ENCODE measurements at regions of chr7 and their contacts with region 1.

Region 1: DNA sequence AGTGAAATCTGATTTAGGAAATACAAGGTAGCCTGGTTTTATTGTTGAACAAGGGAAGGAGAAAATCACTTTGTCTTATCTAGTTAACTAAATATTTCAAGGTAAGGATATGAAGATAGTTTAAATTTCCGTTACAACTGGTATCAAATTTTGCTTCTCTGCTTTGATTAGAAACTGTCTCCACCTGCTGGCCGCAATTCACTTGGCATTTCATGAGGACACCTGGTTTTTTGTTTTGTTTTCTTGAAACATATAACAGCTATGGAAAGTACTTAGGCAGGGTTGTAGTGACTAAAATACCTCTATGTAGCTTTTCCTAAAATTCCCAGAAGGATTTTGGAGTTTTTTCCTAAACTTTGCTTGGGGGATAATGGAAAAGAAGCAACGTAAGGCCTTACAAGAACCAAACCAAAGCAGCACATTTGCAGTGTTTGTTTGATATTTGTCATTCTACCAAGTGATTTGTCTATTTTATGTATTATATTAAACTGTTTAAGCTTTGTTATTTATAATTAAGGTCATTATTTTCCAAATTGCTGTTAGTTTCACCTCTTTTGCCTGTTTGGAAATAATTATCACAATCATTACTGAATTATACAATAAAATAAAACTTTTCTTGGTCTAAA is 73.6 kb downstream of the AHCYL2 start:
- DNase-seq: peak in 32 of 35 experiments; percentile 6 to 66 (median 43)
- ATAC-seq: peak in 1 of 4 experiments; percentile 31
- H3K4me3 ChIP-seq: no peak overlapping the region
- H3K4me3 Mint-ChIP-seq: no peak overlapping the region
- H3K27ac ChIP-seq: no peak overlapping the region
- H3K27ac Mint-ChIP-seq: no peak overlapping the region
- H3K4me1 ChIP-seq: no peaks in the 10 kb centered on the region
- H3K4me1 Mint-ChIP-seq: peaks cover 0 to 7% (median 4%) of the 10 kb centered on the region in 3 donors
- H3K27me3 ChIP-seq: no peaks in the 10 kb centered on the region
- H3K27me3 Mint-ChIP-seq: no peaks in the 10 kb centered on the region

Region 2: DNA sequence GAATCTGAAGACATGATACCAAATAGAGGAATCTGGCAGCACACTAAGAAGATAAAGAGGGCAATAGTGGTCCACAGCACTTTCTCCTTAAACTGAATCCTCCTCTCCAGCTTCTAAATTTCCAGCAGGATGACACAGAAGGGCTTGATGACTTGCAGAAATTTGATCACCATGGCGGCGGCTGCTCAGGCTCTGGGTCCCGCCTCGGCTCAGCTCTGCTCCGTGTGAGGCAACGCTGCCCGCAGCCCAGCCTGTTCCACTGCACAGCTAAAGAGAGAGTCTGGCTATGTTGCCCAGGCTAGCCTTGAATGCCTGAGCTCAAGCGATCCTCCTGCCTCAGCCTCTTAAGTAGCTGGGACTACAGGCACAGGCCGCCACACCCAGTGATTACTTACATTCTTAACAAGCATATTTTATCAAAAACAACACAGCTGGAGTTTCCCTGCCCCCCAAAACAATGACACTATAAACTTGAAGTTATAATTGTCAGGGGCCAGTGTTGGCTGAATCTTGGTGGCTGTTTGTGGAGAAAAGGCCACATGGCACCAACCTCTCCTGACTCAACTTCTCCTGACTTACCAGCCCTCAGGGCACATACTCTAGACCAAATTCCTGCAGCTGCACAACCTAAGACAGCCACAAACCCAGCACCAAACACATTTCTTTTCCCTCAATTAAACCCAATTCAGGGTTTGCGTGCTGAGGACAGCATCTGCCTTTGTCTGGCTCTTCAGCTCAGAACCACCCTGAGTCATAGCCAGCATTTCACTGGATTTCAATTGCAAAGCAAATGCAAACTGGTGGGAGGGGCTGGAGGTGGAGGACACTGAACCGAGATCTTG is 231.9 kb before region 1 on chr7:
- CTCF ChIA-PET with region 1: no interaction called
- POLR2A ChIA-PET with region 1: no interaction called
- DNase-seq: no peak
- ATAC-seq: no peak
- H3K4me3 ChIP-seq: no peak overlapping the region
- H3K4me3 Mint-ChIP-seq: no peak overlapping the region
- H3K27ac ChIP-seq: no peak overlapping the region
- H3K27ac Mint-ChIP-seq: no peak overlapping the region
- H3K4me1 ChIP-seq: no peaks in the 10 kb centered on the region
- H3K4me1 Mint-ChIP-seq: no peaks in the 10 kb centered on the region
- H3K27me3 ChIP-seq: peaks cover 0 to 14% of the 10 kb centered on the region in 2 experiments
- H3K27me3 Mint-ChIP-seq: peaks cover 15% of the 10 kb centered on the region in 2 donors

Region 3: DNA sequence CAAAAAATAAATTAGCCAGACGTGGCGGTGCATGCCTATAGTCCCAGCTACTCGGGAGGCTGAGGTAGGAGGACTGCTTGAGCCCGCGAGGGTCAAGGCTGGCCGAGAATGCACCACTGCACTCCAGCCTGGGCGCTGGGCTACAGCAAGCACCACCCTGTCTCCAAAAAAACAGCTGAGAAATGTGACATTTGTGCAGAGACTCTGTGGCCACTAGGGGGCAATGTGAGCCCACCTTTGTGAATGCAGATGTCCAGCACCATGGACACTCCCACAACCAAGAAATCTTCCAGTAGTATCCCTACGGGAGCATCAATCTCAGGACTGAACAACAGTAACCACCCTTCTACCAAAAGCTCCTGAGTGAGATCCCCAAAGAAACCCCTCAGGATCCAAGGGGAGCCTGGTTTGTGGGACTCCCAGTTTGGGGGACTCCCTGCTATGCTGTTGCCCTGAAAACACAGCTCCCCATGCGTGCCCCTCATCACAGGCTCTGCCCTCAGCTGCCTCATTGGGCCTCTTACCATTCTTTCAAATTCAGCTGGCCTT is 79.8 kb before region 1 on chr7:
- CTCF ChIA-PET with region 1: interaction called, 13 to 48 read pairs
- POLR2A ChIA-PET with region 1: interaction called in 1 of 2 experiments, 3 read pairs
- DNase-seq: peak; percentile 33 to 89 (median 69)
- ATAC-seq: peak; percentile 84 to 88 (median 85)
- H3K4me3 ChIP-seq: no peak overlapping the region
- H3K4me3 Mint-ChIP-seq: no peak overlapping the region
- H3K27ac ChIP-seq: no peak overlapping the region
- H3K27ac Mint-ChIP-seq: no peak overlapping the region
- H3K4me1 ChIP-seq: peaks cover 8 to 12% of the 10 kb centered on the region in 2 experiments
- H3K4me1 Mint-ChIP-seq: peaks cover 14 to 18% (median 14%) of the 10 kb centered on the region in 3 donors
- H3K27me3 ChIP-seq: peaks cover 0 to 3% of the 10 kb centered on the region in 2 experiments
- H3K27me3 Mint-ChIP-seq: peaks cover 0 to 2% of the 10 kb centered on the region in 2 donors

Region 4: GRCh38 chr7:129362496-129362895 is 64.1 kb after region 1 on chr7:
- CTCF ChIA-PET with region 1: interaction called in 1 of 2 experiments, 10 read pairs
- POLR2A ChIA-PET with region 1: no interaction called
- DNase-seq: no peak
- ATAC-seq: no peak
- H3K4me3 ChIP-seq: no peak overlapping the region
- H3K4me3 Mint-ChIP-seq: no peak overlapping the region
- H3K27ac ChIP-seq: no peak overlapping the region
- H3K27ac Mint-ChIP-seq: no peak overlapping the region
- H3K4me1 ChIP-seq: peaks cover 0 to 2% of the 10 kb centered on the region in 2 experiments
- H3K4me1 Mint-ChIP-seq: peaks cover 0 to 8% (median 8%) of the 10 kb centered on the region in 3 donors
- H3K27me3 ChIP-seq: no peaks in the 10 kb centered on the region
- H3K27me3 Mint-ChIP-seq: no peaks in the 10 kb centered on the region

Region 5: DNA sequence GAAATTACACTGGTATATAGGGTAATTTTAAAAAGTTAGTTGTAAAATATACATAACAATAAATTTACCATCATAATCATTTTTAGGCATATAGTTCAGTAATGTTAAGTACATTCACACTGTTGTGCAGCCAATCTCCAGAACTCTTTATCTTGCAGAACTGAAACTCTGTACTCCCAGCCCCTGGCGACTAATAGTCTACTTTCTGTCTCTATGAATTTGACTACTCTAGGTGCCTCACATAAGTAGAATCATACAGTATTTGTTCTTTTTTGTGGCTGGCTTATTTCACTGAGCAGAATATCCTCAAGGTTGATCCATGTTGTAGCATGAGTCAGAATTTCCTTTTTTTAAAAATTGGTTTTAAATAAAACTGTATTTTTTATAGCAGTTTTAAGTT is 354.5 kb after region 1 on chr7:
- CTCF ChIA-PET with region 1: no interaction called
- POLR2A ChIA-PET with region 1: no interaction called
- DNase-seq: no peak
- ATAC-seq: no peak
- H3K4me3 ChIP-seq: no peak overlapping the region
- H3K4me3 Mint-ChIP-seq: no peak overlapping the region
- H3K27ac ChIP-seq: no peak overlapping the region
- H3K27ac Mint-ChIP-seq: no peak overlapping the region
- H3K4me1 ChIP-seq: no peaks in the 10 kb centered on the region
- H3K4me1 Mint-ChIP-seq: peaks cover 33 to 46% (median 45%) of the 10 kb centered on the region in 3 donors
- H3K27me3 ChIP-seq: no peaks in the 10 kb centered on the region
- H3K27me3 Mint-ChIP-seq: no peaks in the 10 kb centered on the region

Measured in T-cell (primary cell).